Stomach (tissue), 19 donors: ENCODE measurements at regions of chr7 and their contacts with region 1.

Region 1: GRCh38 chr7:5363729-5364128 is 59.9 kb downstream of the TNRC18 start:
- DNase-seq: no peak
- H3K4me3 ChIP-seq: no peak overlapping the region
- H3K27ac ChIP-seq: peak overlapping the region in 1 of 5 donors; percentile 46
- H3K4me1 ChIP-seq: peaks cover 0 to 74% (median 39%) of the 10 kb centered on the region in 4 donors
- H3K27me3 ChIP-seq: no peaks in the 10 kb centered on the region
- CTCF ChIP-seq: no peak
- EP300 ChIP-seq: no peak
- POLR2A ChIP-seq: no peak

Region 2: GRCh38 chr7:5177060-5177459 is 186.7 kb before region 1 on chr7:
- intact Hi-C with region 1: no loop called
- DNase-seq: peak; percentile 61 to 93
- H3K4me3 ChIP-seq: no peak overlapping the region
- H3K27ac ChIP-seq: peak overlapping the region; percentile 21 to 66 (median 46)
- H3K4me1 ChIP-seq: peaks cover 5 to 14% (median 10%) of the 10 kb centered on the region in 4 donors
- H3K27me3 ChIP-seq: no peaks in the 10 kb centered on the region
- CTCF ChIP-seq: peak in 1 of 7 experiments; percentile 8
- EP300 ChIP-seq: no peak
- POLR2A ChIP-seq: no peak

Region 3: DNA sequence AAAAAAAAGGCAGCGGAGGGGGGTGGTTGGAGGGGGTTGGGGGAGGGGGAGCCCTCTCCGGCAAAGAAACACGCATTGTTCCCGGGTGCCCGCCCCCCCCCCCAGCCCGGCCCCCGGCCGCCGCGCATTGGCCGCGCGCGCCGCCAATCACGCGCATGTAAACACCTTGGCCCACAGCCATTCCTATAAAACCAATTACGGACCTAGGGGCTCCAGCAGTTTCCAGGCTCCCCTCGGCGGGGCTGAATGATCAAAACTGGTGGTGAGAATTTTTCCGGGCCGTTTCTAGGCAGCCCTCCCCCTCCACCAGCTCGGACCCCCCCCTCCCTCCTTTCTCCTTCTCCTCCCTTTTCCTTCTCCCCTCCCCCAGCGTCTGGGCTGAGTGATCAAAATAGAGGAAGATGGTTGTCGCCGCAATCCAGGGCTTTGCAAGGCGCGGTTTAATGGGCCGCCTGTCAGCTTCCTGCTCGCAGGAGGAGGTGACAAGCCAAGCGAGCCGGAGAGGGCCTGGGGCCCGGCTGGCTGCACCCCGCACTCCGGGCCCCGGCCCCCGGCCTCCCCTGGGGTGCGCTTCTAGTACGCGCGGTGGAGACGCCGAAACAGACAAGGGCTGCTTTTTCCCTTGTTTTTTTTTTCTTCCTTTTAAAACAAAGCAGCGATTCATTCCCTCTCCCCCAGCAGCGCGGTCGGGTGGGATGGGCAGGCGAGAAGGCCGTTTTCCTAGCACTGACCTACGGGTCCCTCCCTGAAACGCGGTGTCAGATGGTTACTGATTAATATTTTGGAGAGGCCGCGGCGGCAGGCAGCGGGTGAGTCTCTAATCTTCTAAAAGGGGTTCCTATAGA is 60.3 kb after region 1 on chr7:
- intact Hi-C with region 1: no loop called
- DNase-seq: peak; percentile 96 to 99
- H3K4me3 ChIP-seq: peak overlapping the region; percentile 63 to 93 (median 82)
- H3K27ac ChIP-seq: peak overlapping the region; percentile 94 to 100 (median 99)
- H3K4me1 ChIP-seq: peaks cover 13 to 30% (median 24%) of the 10 kb centered on the region in 4 donors
- H3K27me3 ChIP-seq: peaks cover 0 to 14% (median 0%) of the 10 kb centered on the region in 3 donors
- CTCF ChIP-seq: no peak
- EP300 ChIP-seq: no peak
- POLR2A ChIP-seq: no peak

Region 4: GRCh38 chr7:5450549-5451372 is 87.0 kb after region 1 on chr7:
- intact Hi-C with region 1: loop called (anchors 10 kb)
- DNase-seq: peak; percentile 55 to 89
- H3K4me3 ChIP-seq: no peak overlapping the region
- H3K27ac ChIP-seq: no peak overlapping the region
- H3K4me1 ChIP-seq: peaks cover 4 to 23% (median 20%) of the 10 kb centered on the region in 4 donors
- H3K27me3 ChIP-seq: no peaks in the 10 kb centered on the region
- CTCF ChIP-seq: peak in 5 of 7 experiments; percentile 36 to 82 (median 54)
- EP300 ChIP-seq: no peak
- POLR2A ChIP-seq: no peak